HCT116 (cell line): ENCODE measurements at regions of chr2 and their contacts with region 1.

Region 1: DNA sequence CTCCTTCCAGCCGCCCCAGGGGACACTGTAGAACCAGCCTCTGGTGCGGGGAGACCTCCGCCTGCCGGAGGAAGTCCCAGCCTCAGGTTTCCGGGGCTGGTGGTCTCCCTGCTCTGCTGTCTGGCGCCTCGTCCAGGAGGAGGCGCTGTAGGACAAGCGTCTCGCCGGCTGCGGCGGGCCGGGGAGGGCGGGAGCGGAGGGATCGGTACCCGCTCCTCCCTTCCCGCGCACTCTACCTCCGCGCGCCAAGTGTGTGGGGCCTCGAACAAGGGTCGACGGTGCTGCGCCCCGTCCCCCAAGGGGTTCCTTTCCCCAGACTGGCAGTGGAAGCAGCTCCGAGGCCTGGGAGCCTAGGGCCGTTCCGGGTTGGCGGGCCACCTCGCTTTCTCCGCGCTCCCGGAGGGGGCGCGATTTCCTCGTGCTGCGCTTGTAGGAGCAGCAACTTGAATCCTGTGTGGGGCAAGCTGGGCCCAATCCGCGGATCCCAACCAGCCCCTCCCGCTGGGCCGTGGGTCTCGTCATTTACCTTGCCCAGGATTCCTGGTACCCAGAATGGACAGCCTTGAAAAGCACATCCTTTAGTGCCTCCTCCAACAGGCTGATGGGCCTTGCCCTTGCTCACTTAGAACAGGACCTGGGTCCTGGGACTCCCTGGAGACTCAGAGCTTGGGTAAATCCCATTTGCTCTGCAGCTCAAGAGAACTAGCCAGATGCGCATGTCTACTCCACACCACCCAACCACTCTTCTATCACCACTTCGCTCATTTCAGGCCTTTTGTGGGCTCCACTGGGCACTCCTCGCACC is 10.6 kb upstream of the HOXD4 start:
- DNase-seq: peak; percentile 48
- ATAC-seq: peak; percentile 90
- H3K4me3 ChIP-seq: peak overlapping the region; percentile 25 to 40
- H3K27ac ChIP-seq: no peak overlapping the region; the same call in 1 of the 2 replicates
- H3K4me1 ChIP-seq: peaks cover 2 to 18% of the 10 kb centered on the region in 2 experiments; a peak in 3 of 4 replicates
- H3K27me3 ChIP-seq: no peaks in the 10 kb centered on the region
- CTCF ChIP-seq: peak; percentile 83 to 97 (median 86)
- POLR2A ChIP-seq: no peak
- RAD21 ChIP-seq: peak; percentile 98

Region 2: DNA sequence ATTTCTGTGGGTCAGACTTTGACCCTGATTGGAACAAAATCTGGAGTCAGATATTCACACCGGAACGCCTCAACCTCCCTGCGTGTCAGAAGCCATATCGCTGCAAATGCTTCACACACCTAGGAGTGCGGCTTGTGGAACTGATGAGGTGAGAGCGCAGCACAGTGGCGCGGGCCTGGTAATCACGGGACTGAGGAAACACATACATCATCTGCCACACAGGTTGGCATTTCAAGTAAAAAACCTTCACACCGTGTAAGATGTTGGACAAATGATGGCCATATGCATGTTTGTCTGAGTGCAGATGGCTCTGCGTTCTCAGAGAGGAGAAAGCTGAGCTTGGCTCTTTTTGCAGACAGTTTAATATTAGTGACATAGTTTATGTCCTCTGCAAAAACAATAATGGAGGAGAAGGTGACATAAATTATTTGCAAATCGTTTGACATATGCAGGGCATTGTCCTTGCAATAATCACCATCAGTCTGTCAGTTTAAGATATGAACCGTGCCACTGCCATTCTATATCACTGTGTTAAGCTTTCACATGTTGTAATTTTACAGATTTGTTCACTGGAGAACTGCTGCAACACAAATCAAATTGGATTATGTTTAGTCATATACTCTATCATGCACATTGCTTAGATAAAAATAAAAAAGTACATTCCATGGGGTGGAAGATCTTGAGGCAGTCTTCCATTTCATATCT is 229.9 kb after region 1 on chr2:
- CTCF ChIA-PET with region 1: no interaction called
- POLR2A ChIA-PET with region 1: no interaction called
- RAD21 ChIA-PET with region 1: no interaction called
- intact Hi-C with region 1: no loop called
- DNase-seq: no peak
- ATAC-seq: no peak
- H3K4me3 ChIP-seq: no peak overlapping the region
- H3K27ac ChIP-seq: no peak overlapping the region
- H3K4me1 ChIP-seq: no peaks in the 10 kb centered on the region
- H3K27me3 ChIP-seq: no peaks in the 10 kb centered on the region
- CTCF ChIP-seq: no peak
- POLR2A ChIP-seq: no peak
- RAD21 ChIP-seq: peak; percentile 25; the same call in 1 of the 2 replicates

Region 3: GRCh38 chr2:176454893-176455811 is 314.4 kb after region 1 on chr2:
- CTCF ChIA-PET with region 1: interaction called, 109 read pairs
- POLR2A ChIA-PET with region 1: interaction called, 4 read pairs
- RAD21 ChIA-PET with region 1: interaction called, 16 read pairs
- intact Hi-C with region 1: loop called (anchors 1 kb)
- DNase-seq: peak; percentile 45
- ATAC-seq: peak; percentile 90
- H3K4me3 ChIP-seq: no peak overlapping the region
- H3K27ac ChIP-seq: no peak overlapping the region
- H3K4me1 ChIP-seq: 0 out of 4 replicates have a peak, but pooled peaks cover 0 to 3% of the 10 kb centered on the region in 2 experiments
- H3K27me3 ChIP-seq: no peaks in the 10 kb centered on the region
- CTCF ChIP-seq: peak; percentile 85 to 91 (median 85)
- POLR2A ChIP-seq: no peak
- RAD21 ChIP-seq: peak; percentile 86

Region 4: DNA sequence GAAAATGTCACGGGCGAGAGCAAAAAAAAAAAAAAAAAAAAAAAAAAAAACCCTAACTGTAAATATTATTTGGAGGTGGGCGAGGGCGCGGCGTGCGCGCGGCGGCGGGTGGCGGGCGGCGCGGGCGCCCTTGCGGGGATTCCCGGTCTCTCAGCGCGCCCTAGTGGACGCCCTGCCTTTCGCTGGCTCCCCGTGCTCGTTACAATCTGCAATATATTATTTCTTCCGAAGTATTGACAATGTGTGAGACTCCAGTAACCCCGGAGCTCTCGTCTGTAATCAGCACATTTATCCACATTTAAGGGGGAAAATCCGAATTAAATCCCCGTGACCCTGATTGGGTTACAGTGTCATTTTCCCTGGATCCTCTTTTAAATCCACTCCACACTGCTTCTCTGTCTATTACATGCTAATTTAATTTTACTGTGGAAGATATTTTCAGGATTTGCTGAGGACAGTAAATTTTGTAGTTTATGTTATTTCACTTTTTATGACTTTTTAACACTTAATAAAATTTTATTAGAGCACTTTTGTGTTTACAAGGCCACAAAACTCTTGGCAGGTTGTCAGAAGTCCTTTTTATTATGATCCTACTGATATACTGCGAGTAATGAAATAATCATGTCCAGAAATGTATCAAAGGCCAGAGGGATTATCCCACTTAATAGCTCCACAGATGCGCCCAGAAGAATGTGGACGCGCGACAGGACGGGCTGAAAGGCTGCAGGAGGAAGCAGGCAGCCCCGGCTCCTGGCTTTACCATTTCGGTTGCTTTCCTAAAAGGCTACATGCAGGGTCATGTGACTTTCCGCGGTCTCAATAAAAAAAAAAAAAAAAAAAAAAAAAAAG is 497.7 kb after region 1 on chr2:
- CTCF ChIA-PET with region 1: interaction called, 34 read pairs
- POLR2A ChIA-PET with region 1: interaction called, 5 read pairs
- RAD21 ChIA-PET with region 1: interaction called, 3 to 9 read pairs
- intact Hi-C with region 1: loop called (anchors 1 kb)
- DNase-seq: no peak
- ATAC-seq: peak; percentile 91
- H3K4me3 ChIP-seq: peak overlapping the region; percentile 10 to 31; a peak in 3 of 4 replicates
- H3K27ac ChIP-seq: no peak overlapping the region
- H3K4me1 ChIP-seq: peaks cover 0 to 9% of the 10 kb centered on the region in 2 experiments; a peak in 1 of 4 replicates
- H3K27me3 ChIP-seq: no peaks in the 10 kb centered on the region
- CTCF ChIP-seq: peak; percentile 53 to 89 (median 54)
- POLR2A ChIP-seq: no peak
- RAD21 ChIP-seq: peak; percentile 84

Region 5: GRCh38 chr2:177242116-177242987 is 1101.6 kb after region 1 on chr2:
- CTCF ChIA-PET with region 1: no interaction called
- POLR2A ChIA-PET with region 1: no interaction called
- RAD21 ChIA-PET with region 1: interaction called in 1 of 2 experiments, 10 read pairs
- intact Hi-C with region 1: no loop called
- DNase-seq: peak; percentile 83
- ATAC-seq: peak; percentile 71
- H3K4me3 ChIP-seq: peak overlapping the region; percentile 27 to 48
- H3K27ac ChIP-seq: peak overlapping the region; percentile 81
- H3K4me1 ChIP-seq: peaks cover 66 to 77% of the 10 kb centered on the region in 2 experiments
- H3K27me3 ChIP-seq: no peaks in the 10 kb centered on the region
- CTCF ChIP-seq: no peak
- POLR2A ChIP-seq: no peak
- RAD21 ChIP-seq: no peak